Mucosa of descending colon (tissue), 3 donors: ENCODE measurements at regions of chr17 and their contacts with region 1.

Region 1: DNA sequence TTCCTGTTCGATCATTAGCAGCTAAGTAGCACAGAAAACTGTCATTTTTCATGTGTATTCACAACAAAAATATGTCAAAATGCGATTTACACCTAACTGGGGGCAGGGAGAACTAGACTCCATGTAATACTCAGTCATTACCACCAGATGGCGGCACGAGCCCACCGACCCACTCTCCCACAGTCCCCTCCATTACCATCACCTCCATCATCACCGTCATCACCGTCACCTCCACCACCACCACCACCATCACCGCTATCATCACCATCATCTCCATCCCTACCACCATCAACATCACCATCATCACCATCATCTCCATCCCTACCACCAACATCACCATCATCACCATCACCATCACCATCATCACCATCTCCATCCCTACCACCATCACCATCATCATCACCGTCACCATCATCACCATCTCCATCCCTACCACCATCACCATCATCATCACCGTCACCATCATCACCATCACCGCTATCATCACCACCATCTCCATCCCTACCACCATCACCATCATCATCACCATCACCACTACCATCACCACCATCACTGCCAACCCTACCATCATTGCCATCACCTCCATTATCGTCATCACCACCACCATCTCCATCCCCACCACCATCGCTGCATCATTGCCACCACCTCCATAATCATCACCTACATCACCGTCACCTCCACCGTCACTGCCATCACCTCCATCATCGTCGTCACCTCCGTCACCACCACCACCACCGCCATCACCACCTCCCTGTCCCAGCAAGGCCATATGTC is 14.4 kb downstream of the NDUFAF8 start:
- DNase-seq: peak in 2 of 3 donors; percentile 25 to 56
- ATAC-seq: no peak
- H3K4me3 ChIP-seq: no peak overlapping the region
- H3K4me1 ChIP-seq: peaks cover 42% of the 10 kb centered on the region
- CTCF ChIP-seq: peak; percentile 61

Region 2: DNA sequence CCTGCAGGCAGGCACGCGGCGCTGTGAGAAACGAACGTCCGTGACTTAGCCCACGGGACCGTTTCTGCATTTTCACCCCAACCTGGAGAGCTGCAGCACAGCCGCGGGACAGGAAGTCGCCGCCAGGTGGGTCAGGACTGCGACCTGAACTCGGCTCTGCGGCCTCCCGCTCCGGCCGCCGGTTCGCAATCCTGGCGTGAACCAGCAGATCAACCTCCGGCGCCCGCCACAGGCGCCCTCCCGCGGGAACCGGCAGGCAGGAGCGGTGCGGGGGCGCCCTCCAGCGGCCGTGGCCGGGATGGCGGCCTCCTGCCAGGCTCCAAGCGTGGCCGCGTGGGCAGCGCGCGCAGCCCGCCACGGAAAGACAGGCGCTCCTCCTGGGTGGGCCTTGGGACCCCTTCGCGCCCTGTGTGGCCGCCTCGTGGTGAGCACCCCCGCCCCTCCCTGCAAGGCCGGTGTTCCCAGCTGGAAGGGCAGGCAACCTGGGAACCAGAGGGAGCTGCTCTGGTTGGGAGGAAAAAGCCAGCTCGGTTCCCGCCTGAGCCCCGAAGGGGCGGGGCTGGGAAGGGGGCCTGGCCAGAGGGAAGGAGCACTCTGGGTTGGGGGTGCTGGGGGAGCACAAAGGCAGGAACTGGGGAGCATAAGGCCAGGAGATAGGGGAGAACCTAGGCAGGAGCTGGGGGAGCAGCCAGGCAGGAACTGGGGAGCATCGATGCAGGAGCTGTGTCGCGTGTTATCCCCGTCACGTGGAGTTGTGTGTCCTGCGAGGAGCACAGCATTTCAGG is 230.8 kb after region 1 on chr17:
- intact Hi-C with region 1: loop called in 1 of 2 experiments (anchors 10 kb)
- DNase-seq: peak; percentile 89 to 94 (median 93)
- ATAC-seq: peak; percentile 88
- H3K4me3 ChIP-seq: no peak overlapping the region
- H3K4me1 ChIP-seq: peaks cover 18% of the 10 kb centered on the region
- CTCF ChIP-seq: peak; percentile 99